Cardiac septum (tissue), 1 donor: ENCODE measurements at regions of chr1 and their contacts with region 1.

Region 1: DNA sequence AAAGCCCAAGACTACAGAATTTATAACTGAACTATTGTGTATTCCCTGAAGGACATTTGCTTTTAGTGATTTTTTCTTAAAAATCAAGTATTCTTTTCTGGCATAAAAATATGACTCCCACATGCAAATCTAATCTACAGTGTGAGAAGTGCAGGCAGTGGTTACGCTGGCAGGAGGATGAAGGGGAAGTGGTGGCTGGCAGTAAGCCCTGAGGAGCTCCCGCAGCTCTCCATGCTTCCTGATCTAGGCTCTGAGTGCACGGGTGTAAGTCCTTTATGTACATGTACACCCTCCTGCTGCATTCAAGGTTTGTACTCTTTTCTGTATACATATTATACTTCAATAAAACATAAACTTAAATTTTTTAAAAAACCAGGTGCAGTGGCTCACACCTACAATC is 67.5 kb upstream of the PRDX6 start:
- DNase-seq: peak; percentile 76

Region 2: DNA sequence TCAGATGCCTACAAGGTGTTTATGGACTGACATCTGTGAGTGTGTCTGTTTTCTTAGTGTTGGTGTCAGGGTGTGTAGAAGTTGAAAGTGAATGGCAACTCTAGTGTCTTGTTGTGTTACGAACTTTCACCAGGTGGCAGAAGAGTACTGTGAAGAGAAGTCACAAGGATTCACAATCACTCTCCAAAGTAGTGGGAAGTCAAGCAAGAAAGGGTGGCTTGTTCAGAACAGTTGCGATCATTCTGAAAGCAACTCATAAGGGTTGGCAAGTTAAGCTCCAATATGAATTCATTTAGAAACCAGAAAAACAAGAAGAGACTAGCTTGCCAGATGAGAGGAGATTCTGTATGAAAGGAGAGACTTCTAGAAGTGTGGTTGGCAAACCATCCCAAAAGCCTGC is 664.6 kb before region 1 on chr1:
- intact Hi-C with region 1: loop called (anchors 10 kb)
- DNase-seq: no peak

Region 3: GRCh38 chr1:172826096-172826743 is 583.4 kb before region 1 on chr1:
- intact Hi-C with region 1: loop called (anchors 10 kb)
- DNase-seq: no peak

Region 4: GRCh38 chr1:173255214-173255813 is 154.3 kb before region 1 on chr1:
- intact Hi-C with region 1: loop called (anchors 10 kb)
- DNase-seq: no peak

Region 5: DNA sequence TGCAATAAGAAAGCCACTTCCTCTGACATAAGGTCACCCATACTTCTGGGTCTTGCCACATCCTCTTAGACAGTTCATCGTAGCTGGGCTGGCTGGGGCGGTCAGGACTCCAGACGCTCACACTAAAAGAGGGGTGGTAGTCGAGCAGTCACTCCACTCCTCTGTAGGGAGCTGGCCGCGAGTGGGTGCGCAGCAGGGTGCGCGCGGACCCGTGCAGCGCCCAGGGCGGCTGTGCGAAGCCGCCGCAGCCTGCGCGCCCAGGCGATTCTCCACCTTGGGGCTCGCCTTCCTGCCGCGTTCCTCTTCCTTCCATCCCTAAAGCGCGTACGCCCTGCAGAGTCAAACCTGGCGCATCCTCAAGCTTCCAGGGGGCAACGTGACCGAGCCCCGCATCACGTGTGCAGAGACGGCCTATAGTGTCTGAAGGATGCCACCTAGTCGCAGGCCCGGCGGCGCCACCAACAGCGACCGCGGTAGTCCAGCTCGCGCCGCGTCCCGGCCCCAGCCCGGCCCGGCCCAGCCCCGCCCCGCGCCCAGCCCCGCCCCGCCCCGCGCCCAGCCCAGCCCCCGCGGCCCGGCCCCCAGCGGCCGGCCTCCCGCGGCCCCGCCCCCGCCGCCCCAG is 67.2 kb after region 1 on chr1:
- intact Hi-C with region 1: no loop called
- DNase-seq: peak; percentile 96